OCI-LY7 (cell line): ENCODE measurements at regions of chr15 and their contacts with region 1.

Region 1: GRCh38 chr15:40857601-40858341 is 13.9 kb downstream of the SPINT1 start:
- DNase-seq: peak; percentile 77
- H3K4me3 ChIP-seq: no peak overlapping the region
- H3K27ac ChIP-seq: no peak overlapping the region
- H3K4me1 ChIP-seq: peaks cover 22% of the 10 kb centered on the region
- CTCF ChIP-seq: peak; percentile 97

Region 2: GRCh38 chr15:40847205-40847961 is 10.4 kb before region 1 on chr15:
- CTCF ChIA-PET with region 1: interaction called, 19 read pairs
- POLR2A ChIA-PET with region 1: interaction called, 4 read pairs
- intact Hi-C with region 1: no loop called
- DNase-seq: peak; percentile 72
- H3K4me3 ChIP-seq: peak overlapping the region; percentile 14
- H3K27ac ChIP-seq: no peak overlapping the region
- H3K4me1 ChIP-seq: peaks cover 25% of the 10 kb centered on the region
- CTCF ChIP-seq: no peak

Region 3: DNA sequence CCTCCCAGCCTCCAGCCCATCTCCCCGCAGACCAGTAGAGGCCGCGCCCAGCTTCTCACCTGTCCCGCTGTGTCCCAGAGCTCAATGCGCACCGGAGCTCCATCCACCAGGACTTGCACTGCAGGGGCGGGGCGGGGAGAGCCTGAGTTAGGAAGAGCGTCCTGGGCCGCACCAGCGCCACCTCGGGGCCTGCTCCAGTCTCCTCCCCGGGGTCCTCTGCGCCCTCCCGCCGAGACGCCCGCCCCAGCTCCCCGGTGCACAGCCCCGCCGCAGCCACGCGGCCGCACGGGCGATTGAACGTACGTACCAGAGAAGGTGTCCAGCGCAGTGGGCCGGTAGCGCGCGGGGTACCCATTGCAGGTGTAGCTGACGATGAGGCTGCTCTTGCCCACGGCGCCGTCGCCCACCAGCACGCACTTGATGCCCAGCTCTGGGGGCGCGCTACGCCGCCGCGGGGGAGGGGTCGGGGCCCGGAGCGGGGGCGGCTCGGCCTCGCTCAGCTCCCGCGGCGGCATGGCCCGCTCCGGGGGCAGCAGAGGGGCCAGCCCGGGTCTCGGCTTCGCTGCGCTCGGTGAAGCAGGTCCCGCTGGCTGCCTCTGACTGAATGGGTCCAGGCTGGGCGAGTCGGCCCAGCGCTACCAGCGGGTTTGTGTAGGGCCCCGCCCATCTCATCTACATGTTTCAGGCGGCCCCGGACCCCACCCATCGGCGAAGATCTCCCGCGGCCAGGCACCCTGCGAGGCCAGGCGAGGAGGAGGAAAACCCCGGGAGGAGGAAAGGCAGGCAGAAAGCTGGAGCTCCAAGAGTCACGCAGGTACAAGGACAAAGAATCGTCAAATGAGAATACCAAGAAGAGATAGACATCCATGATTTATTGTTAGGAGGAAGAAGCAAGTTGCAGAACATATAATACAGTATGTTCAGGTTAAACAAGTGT is 16.1 kb after region 1 on chr15 and contains the start of gene RHOV:
- CTCF ChIA-PET with region 1: interaction called, 23 read pairs
- POLR2A ChIA-PET with region 1: interaction called, 4 read pairs
- intact Hi-C with region 1: no loop called
- DNase-seq: peak; percentile 72
- H3K4me3 ChIP-seq: peak within 1 kb of the TSS; percentile 69
- H3K27ac ChIP-seq: no peak within 1 kb of the TSS
- H3K4me1 ChIP-seq: peaks cover 24% of the 10 kb centered on the region
- CTCF ChIP-seq: peak; percentile 71
- total RNA-seq, gene RHOV: 0.80 and 1.5 TPM in 2 replicates